Breast epithelium (tissue), 4 donors: ENCODE measurements at regions of chr20 and their contacts with region 1.

Region 1: DNA sequence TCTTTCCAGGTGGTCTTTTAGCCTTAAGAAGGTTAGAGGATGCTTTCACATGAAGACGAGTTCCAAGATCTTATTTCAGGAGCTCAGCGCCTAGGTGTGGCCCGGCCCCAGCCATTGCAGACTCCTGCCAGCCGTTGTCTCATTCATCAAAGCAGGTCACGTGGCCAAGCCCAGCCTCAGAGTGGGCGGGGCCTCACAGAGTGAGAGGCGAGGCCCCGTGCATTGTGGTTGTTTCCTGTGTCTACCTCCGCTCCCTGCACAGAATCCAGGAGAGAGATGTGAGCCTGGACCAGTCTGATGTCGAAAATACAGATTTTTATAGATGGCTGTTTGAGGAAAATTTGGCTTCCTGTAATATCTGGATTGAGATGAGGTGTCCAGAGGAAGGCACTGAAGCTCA is 49.2 kb upstream of the CST5 start:
- DNase-seq: no peak
- H3K4me3 ChIP-seq: no peak overlapping the region
- H3K27ac ChIP-seq: no peak overlapping the region
- H3K4me1 ChIP-seq: no peaks in the 10 kb centered on the region
- H3K27me3 ChIP-seq: no peaks in the 10 kb centered on the region
- CTCF ChIP-seq: no peak
- POLR2A ChIP-seq: no peak

Region 2: GRCh38 chr20:22887796-22888195 is 1041.0 kb before region 1 on chr20:
- intact Hi-C with region 1: no loop called
- DNase-seq: no peak
- H3K4me3 ChIP-seq: no peak overlapping the region
- H3K27ac ChIP-seq: no peak overlapping the region
- H3K4me1 ChIP-seq: no peaks in the 10 kb centered on the region
- H3K27me3 ChIP-seq: no peaks in the 10 kb centered on the region
- CTCF ChIP-seq: no peak
- POLR2A ChIP-seq: no peak

Region 3: DNA sequence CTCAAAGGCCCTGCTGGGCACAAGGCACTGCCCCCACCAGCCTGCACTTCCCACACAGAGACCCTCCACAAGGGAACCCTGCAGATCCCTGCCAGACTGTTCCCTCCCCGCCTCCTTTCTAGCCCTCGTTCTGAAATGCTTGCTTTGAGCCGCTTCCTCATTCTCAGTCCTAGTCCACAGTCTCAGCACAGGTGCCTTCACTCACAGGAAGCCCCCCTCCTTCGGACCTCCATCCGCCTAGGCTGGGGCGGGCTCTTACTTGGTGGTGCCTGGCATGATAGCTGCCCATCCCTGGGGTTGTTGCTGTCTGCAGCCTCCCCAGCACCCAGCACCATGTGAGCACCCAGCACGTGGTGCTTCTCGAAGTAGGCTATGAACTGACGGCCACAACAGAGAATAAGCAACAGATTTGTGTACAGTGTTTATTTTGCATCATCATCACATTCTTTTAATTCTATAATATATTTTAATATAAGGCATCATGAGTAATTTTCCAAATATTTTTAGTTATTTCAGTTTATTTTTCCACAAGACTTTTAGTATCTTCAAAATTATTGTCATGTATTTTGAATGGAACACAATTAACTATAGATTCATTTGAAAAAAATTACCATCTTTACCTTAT is 61.5 kb before region 1 on chr20:
- intact Hi-C with region 1: no loop called
- DNase-seq: no peak
- H3K4me3 ChIP-seq: no peak overlapping the region
- H3K27ac ChIP-seq: no peak overlapping the region
- H3K4me1 ChIP-seq: no peaks in the 10 kb centered on the region
- H3K27me3 ChIP-seq: peaks cover 0 to 26% of the 10 kb centered on the region in 2 donors
- CTCF ChIP-seq: no peak
- POLR2A ChIP-seq: no peak

Region 4: DNA sequence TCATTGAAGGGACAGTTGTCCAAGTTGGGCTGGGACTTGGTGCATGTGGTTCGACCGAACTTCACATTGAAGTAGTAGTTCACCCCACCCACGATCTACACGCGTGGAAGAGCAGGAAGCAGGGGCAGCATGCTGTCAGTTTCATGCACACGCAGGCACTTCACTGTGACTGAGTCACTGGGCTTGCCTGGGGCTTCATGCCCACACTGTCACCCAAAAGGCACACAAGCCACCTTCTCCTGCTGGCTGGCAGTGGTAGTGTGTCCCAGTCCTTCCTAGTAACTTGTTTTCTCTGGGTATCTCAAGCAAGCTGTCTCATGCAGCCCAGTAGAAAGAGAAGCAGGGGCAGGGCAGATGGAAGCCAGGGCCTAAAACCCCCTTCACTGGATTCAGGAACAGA is 51.3 kb before region 1 on chr20:
- intact Hi-C with region 1: loop called (anchors 2 kb)
- DNase-seq: no peak
- H3K4me3 ChIP-seq: no peak overlapping the region
- H3K27ac ChIP-seq: no peak overlapping the region
- H3K4me1 ChIP-seq: no peaks in the 10 kb centered on the region
- H3K27me3 ChIP-seq: no peaks in the 10 kb centered on the region
- CTCF ChIP-seq: no peak
- POLR2A ChIP-seq: no peak

Region 5: DNA sequence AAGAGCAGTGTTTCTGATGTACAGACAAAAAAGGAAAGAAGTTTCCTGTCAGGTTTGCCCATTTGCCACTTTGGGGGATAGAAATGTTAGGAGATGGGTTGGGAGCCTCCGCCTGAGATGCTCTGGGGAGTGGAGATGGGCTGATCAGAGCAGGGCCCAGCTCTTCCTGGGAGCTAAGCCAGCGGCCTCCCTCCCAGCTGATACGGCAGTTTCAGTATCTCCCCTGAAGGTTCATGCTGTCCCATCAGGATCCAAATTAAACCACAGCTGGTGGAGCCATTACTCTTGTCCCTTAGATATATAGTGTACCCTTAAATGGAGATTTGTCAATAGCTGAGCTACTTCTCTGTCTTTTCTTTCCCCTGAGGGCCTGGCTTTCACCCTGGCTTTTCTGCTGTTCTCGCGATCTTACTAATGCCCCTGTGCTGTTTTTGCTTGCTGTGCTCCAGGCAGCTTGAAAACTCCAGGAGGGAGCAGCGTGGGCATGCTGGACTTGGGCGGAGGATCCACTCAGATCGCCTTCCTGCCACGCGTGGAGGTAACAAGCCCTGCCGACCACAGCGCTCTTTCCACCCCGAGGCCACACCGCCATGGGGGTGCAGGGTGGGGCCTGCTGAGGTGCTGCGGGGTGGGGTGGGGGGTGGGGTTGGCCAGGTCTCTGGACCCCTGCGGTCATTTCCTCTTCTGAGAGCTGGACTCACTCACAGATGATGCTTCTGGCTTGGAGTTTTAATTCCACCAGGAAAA is 1287.6 kb after region 1 on chr20:
- intact Hi-C with region 1: loop called (anchors 5 kb)
- DNase-seq: no peak
- H3K4me3 ChIP-seq: no peak overlapping the region
- H3K27ac ChIP-seq: no peak overlapping the region
- H3K4me1 ChIP-seq: no peaks in the 10 kb centered on the region
- H3K27me3 ChIP-seq: no peaks in the 10 kb centered on the region
- CTCF ChIP-seq: no peak
- POLR2A ChIP-seq: no peak